ENCODE measurements at regions of chr17 and their contacts with region 1.

Region 1: GRCh38 chr17:5198472-5198871 is 6.8 kb upstream of the ZNF594 start:
- DNase-seq: no peak
- H3K4me3 Mint-ChIP-seq: no peak overlapping the region
- H3K27ac Mint-ChIP-seq: no peak overlapping the region
- H3K4me1 Mint-ChIP-seq: peaks cover 3% of the 10 kb centered on the region
- H3K27me3 Mint-ChIP-seq: no peaks in the 10 kb centered on the region

Region 2: GRCh38 chr17:5122586-5123342 is 75.7 kb before region 1 on chr17:
- intact Hi-C with region 1: no loop called
- DNase-seq: no peak
- H3K4me3 Mint-ChIP-seq: peak overlapping the region; percentile 42
- H3K27ac Mint-ChIP-seq: no peak overlapping the region
- H3K4me1 Mint-ChIP-seq: no peaks in the 10 kb centered on the region
- H3K27me3 Mint-ChIP-seq: peaks cover 30% of the 10 kb centered on the region

Region 3: GRCh38 chr17:5237541-5238016 is 39.1 kb after region 1 on chr17:
- intact Hi-C with region 1: loop called (anchors 5 kb)
- DNase-seq: peak; percentile 79
- H3K4me3 Mint-ChIP-seq: no peak overlapping the region
- H3K27ac Mint-ChIP-seq: no peak overlapping the region
- H3K4me1 Mint-ChIP-seq: peaks cover 8% of the 10 kb centered on the region
- H3K27me3 Mint-ChIP-seq: no peaks in the 10 kb centered on the region